HCT116 (cell line): ENCODE measurements at regions of chr10 and their contacts with region 1.

Region 1: GRCh38 chr10:93515071-93516005 is 18.9 kb downstream of the CEP55 start:
- DNase-seq: no peak
- ATAC-seq: no peak
- H3K4me3 ChIP-seq: no peak overlapping the region
- H3K27ac ChIP-seq: no peak overlapping the region
- H3K4me1 ChIP-seq: no peaks in the 10 kb centered on the region
- H3K27me3 ChIP-seq: no peaks in the 10 kb centered on the region
- CTCF ChIP-seq: no peak
- POLR2A ChIP-seq: no peak
- RAD21 ChIP-seq: no peak

Region 2: DNA sequence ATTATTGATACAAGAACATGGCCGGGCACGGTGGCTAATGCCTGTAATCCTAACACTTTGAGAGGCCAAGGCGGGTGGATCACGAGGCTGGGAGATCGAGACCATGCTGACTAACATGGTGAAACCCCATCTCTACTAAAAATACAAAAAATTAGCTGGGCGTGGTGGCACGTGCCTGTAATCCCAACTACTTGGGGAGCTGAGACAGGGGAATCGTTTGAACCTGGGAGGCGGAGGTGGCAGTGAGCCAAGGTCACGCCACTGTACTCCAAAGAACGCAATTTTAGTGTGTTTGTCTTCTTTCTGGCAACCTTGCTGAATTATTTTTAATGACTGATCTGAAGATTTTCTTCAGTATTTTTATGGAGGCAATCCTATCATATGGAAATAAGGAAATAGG is 987.6 kb before region 1 on chr10:
- CTCF ChIA-PET with region 1: no interaction called
- POLR2A ChIA-PET with region 1: no interaction called
- RAD21 ChIA-PET with region 1: no interaction called
- intact Hi-C with region 1: loop called (anchors 10 kb)
- DNase-seq: no peak
- ATAC-seq: no peak
- H3K4me3 ChIP-seq: no peak overlapping the region
- H3K27ac ChIP-seq: no peak overlapping the region
- H3K4me1 ChIP-seq: no peaks in the 10 kb centered on the region
- H3K27me3 ChIP-seq: no peaks in the 10 kb centered on the region
- CTCF ChIP-seq: no peak
- POLR2A ChIP-seq: no peak
- RAD21 ChIP-seq: no peak

Region 3: GRCh38 chr10:93080350-93081046 is 434.8 kb before region 1 on chr10:
- CTCF ChIA-PET with region 1: no interaction called
- POLR2A ChIA-PET with region 1: no interaction called
- RAD21 ChIA-PET with region 1: no interaction called
- intact Hi-C with region 1: loop called (anchors 1 kb)
- DNase-seq: peak; percentile 18
- ATAC-seq: peak; percentile 94
- H3K4me3 ChIP-seq: peak overlapping the region in 1 of 2 experiments; percentile 28; a peak in 1 of 4 replicates
- H3K27ac ChIP-seq: no peak overlapping the region
- H3K4me1 ChIP-seq: peaks cover 0 to 10% of the 10 kb centered on the region in 2 experiments; a peak in 1 of 4 replicates
- H3K27me3 ChIP-seq: no peaks in the 10 kb centered on the region
- CTCF ChIP-seq: peak; percentile 73 to 90 (median 82)
- POLR2A ChIP-seq: no peak
- RAD21 ChIP-seq: peak; percentile 93

Region 4: GRCh38 chr10:93288654-93289634 is 226.4 kb before region 1 on chr10:
- CTCF ChIA-PET with region 1: no interaction called
- POLR2A ChIA-PET with region 1: no interaction called
- RAD21 ChIA-PET with region 1: no interaction called
- intact Hi-C with region 1: no loop called
- DNase-seq: peak; percentile 78
- ATAC-seq: peak; percentile 96
- H3K4me3 ChIP-seq: peak overlapping the region in 1 of 2 experiments; percentile 29; a peak in 1 of 4 replicates
- H3K27ac ChIP-seq: peak overlapping the region; percentile 43; the same call in 1 of the 2 replicates
- H3K4me1 ChIP-seq: peaks cover 5 to 23% of the 10 kb centered on the region in 2 experiments
- H3K27me3 ChIP-seq: no peaks in the 10 kb centered on the region
- CTCF ChIP-seq: peak; percentile 67 to 85 (median 75)
- POLR2A ChIP-seq: no peak
- RAD21 ChIP-seq: peak; percentile 92

Region 5: GRCh38 chr10:93376372-93377293 is 138.7 kb before region 1 on chr10:
- CTCF ChIA-PET with region 1: interaction called, 22 read pairs
- POLR2A ChIA-PET with region 1: no interaction called
- RAD21 ChIA-PET with region 1: no interaction called
- intact Hi-C with region 1: loop called (anchors 1 kb)
- DNase-seq: peak; percentile 80
- ATAC-seq: peak; percentile 83
- H3K4me3 ChIP-seq: no peak overlapping the region
- H3K27ac ChIP-seq: peak overlapping the region; percentile 80
- H3K4me1 ChIP-seq: peaks cover 29 to 49% of the 10 kb centered on the region in 2 experiments
- H3K27me3 ChIP-seq: no peaks in the 10 kb centered on the region
- CTCF ChIP-seq: peak; percentile 84 to 91 (median 90); a peak in 5 of 6 replicates
- POLR2A ChIP-seq: no peak
- RAD21 ChIP-seq: peak; percentile 98

Region 6: GRCh38 chr10:93680412-93681047 is 165.2 kb after region 1 on chr10:
- CTCF ChIA-PET with region 1: interaction called, 11 read pairs
- POLR2A ChIA-PET with region 1: no interaction called
- RAD21 ChIA-PET with region 1: interaction called in 1 of 2 experiments, 3 read pairs
- intact Hi-C with region 1: no loop called
- DNase-seq: peak; percentile 34
- ATAC-seq: peak; percentile 74
- H3K4me3 ChIP-seq: no peak overlapping the region
- H3K27ac ChIP-seq: no peak overlapping the region
- H3K4me1 ChIP-seq: no peaks in the 10 kb centered on the region
- H3K27me3 ChIP-seq: no peaks in the 10 kb centered on the region
- CTCF ChIP-seq: peak; percentile 32 to 65 (median 60); a peak in 5 of 6 replicates
- POLR2A ChIP-seq: no peak
- RAD21 ChIP-seq: peak; percentile 76